ENCODE measurements at regions of chr2 and their contacts with region 1.

Region 1: DNA sequence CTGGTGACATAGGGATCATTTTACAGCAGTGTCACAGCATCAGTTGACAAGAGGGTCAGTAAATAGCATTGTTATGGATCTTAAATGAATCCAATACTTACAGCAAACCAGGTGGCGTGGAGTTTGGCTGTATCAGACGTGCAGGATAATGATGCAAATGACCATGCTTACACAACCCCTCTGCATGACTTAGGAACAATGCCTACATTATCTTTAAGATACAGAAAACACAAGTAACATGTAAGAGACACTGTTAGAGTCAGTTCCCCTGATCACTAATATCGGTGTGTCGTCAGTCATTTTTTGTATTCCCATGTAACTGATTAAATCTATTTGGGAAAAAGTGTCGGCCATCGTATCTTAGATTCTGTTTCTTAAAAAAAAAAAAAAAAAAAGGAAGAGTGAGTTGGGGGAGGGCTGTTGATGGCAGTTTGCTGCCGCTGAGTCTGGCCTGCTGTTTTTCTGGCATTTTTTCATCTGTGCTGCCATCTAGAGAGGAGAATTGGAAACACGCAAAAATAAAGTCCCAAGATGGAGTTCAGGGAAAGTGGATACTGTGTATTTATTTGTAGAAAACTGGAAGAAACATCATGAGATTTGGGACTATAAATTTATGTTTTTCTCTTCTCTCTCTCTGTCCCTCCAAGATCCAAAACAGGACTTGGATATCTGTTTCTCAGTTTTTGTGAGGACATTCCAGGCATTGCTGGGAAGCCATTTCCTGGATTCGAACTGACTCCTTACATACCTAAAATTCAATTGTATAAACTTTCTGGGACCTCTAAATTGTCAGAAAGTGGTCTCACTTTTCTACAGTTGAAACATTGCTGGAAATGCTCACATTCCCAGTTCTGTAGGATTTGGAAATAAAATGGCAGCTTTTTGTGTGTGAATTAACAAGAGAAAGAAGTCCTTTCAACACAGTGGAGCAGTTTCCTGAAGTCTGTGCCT is 60.3 kb upstream of the AGPS start:
- DNase-seq: peak in 2 of 6 donors; percentile 23 to 46
- ATAC-seq: peak; percentile 86 to 94 (median 92)
- H3K4me3 ChIP-seq: no peak overlapping the region
- H3K27ac ChIP-seq: no peak overlapping the region
- H3K4me1 ChIP-seq: no peaks in the 10 kb centered on the region
- H3K27me3 ChIP-seq: no peaks in the 10 kb centered on the region
- CTCF ChIP-seq: peak; percentile 10 to 53 (median 30)

Region 2: DNA sequence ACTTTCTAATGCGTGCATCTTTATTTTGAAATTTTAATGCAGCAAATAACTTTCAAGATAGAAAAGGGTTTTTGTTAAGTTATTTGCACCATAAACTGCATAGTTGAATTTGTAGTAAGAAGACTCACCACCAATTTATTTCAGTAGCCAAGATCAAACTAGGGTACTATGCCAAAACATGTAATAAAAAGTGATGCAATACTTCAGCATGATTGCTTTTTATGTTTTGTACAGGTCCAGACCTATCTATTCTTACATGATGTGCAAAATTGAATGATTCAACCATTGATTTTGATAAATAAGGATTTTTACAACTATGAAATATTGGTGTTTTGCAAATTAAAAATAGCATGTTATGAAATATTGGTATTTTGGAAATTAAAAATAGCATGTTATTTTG is 87.0 kb after region 1 on chr2:
- intact Hi-C with region 1: loop called in 1 of 3 experiments (anchors 10 kb)
- DNase-seq: no peak
- ATAC-seq: peak; percentile 48 to 67 (median 52)
- H3K4me3 ChIP-seq: no peak overlapping the region
- H3K27ac ChIP-seq: no peak overlapping the region
- H3K4me1 ChIP-seq: peaks cover 20 to 51% (median 42%) of the 10 kb centered on the region in 3 donors
- H3K27me3 ChIP-seq: no peaks in the 10 kb centered on the region
- CTCF ChIP-seq: no peak